ENCODE measurements at regions of chr17 and their contacts with region 1.

Region 1: GRCh38 chr17:52106638-52107261 is 51.8 kb downstream of the CA10 start:
- DNase-seq: no peak
- H3K4me3 ChIP-seq: no peak overlapping the region
- CTCF ChIP-seq: peak; percentile 60

Region 2: GRCh38 chr17:51298508-51299371 is 808.0 kb before region 1 on chr17:
- CTCF ChIA-PET with region 1: interaction called, 10 read pairs
- POLR2A ChIA-PET with region 1: no interaction called
- DNase-seq: no peak
- H3K4me3 ChIP-seq: no peak overlapping the region
- CTCF ChIP-seq: peak; percentile 68

Region 3: DNA sequence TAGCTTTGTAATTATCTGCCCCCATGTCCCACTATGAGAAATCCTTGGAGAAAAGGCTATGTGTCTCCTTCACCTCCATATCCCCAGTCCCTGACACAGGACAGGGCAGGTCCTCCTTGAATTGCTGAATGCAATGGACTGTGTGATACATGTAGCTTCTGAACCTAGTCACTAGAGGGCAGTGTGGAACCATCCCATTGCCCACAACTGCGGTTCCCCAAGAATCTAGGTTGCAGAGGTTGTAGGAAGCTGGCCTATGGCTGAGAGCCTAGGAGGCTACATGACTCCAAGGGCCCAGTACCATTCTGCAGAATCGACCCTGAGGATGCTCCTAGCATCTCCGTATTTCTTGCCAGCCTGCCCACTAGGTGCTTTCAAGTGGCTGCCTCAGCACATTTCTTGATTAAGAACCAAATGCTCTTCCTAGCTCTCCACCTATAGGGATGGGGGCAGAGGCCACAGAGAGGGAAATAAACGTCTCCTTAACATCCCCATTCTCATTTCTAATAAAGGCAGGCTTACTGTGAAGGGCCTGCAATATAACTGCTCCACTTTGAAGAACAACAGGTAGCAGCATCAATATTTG is 342.3 kb before region 1 on chr17:
- CTCF ChIA-PET with region 1: interaction called, 72 read pairs
- POLR2A ChIA-PET with region 1: no interaction called
- DNase-seq: peak; percentile 9
- H3K4me3 ChIP-seq: no peak overlapping the region
- CTCF ChIP-seq: peak; percentile 89

Region 4: GRCh38 chr17:51860954-51861561 is 245.7 kb before region 1 on chr17:
- CTCF ChIA-PET with region 1: interaction called, 44 read pairs
- POLR2A ChIA-PET with region 1: no interaction called
- DNase-seq: no peak
- H3K4me3 ChIP-seq: no peak overlapping the region
- CTCF ChIP-seq: peak; percentile 70

Region 5: GRCh38 chr17:52136166-52136565 is 29.4 kb after region 1 on chr17:
- CTCF ChIA-PET with region 1: no interaction called
- POLR2A ChIA-PET with region 1: no interaction called
- DNase-seq: no peak
- H3K4me3 ChIP-seq: no peak overlapping the region
- CTCF ChIP-seq: no peak